ENCODE measurements at regions of chr21 and their contacts with region 1.

Region 1: DNA sequence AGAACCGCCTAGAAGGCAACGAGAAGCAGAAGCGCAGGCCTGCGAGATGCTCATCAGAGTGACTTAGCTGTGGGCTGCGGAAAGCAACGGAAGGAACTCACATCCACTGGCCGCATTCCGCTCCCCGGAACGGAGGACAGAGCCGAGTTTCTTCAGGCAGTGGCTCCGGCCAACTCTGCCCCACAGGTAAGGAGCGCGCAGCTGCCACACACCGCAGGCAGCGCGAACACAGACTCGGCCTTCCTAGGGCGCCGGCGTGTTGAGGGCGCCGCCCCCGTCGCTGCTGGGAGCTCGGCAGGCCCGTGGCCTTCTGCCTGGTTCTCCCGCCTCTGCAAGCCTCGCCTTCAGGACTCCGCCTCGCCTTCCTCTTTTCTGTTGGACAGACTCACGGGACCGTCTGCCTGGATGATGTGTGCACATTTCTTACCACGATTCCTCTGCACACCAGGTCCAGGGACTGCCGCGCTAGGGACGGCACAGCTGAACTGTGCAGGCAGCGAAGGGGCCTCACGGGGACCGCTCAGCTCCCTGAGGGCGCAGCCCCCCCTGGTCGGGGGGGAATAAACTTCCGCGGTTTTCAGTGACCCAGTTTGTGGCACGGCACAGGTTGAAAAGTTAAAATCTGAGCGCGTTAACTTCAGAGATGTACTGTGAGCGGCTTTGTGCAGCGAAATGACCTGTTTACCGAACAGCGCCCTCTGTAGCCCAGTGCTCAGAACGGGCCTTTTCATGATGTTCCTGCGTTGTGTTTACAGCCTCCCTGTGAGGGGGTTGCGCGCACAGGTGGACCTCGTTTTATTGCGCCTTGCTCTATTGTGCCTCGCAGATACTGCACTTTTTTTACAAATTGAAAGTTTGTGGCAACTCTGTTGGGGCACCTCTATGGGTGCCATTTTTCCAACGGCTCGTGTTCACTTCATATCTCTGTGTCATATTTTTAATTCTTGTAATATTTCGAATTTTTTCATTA is 15.8 kb downstream of the TCP10L start:
- DNase-seq: peak; percentile 71 to 89 (median 82)
- H3K4me3 ChIP-seq: peak overlapping the region; percentile 79
- H3K4me3 Mint-ChIP-seq: peak overlapping the region; percentile 87 to 98 (median 96)
- H3K27ac ChIP-seq: peak overlapping the region; percentile 21
- H3K27ac Mint-ChIP-seq: peak overlapping the region; percentile 89 to 97 (median 94)
- H3K4me1 ChIP-seq: no peaks in the 10 kb centered on the region
- H3K4me1 Mint-ChIP-seq: peaks cover 26 to 30% (median 28%) of the 10 kb centered on the region in 3 donors
- H3K27me3 ChIP-seq: no peaks in the 10 kb centered on the region
- H3K27me3 Mint-ChIP-seq: peaks cover 2 to 3% of the 10 kb centered on the region in 2 donors

Region 2: DNA sequence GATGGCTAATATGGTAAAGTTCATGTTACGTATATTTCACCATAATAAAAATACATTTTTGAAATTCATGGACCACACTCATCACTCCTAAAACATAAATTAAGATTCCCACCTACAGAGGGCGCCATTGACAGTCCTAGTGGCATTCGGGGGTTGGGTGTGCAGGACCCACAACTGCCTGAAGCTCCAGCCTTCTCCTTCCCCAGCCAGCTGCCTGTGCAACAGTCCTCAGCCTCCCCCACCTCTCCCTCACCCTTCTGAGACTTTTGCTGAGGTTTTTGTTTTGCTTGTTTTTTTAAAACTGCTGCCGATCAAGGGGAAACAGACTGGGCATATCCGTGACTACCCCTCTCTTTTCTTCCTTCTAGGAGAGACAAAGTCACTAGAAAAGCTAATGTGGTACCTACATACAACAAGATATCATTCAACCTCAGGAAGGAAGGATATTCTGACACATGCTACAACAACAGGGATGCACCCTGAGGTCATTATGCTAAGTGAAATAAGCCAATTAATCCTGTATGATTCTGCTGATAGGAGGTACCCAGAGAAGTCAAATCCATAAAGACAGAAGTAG is 166.3 kb before region 1 on chr21:
- CTCF ChIA-PET with region 1: interaction called, 33 read pairs
- POLR2A ChIA-PET with region 1: interaction called, 3 read pairs
- DNase-seq: peak; percentile 31 to 68 (median 59)
- H3K4me3 ChIP-seq: no peak overlapping the region
- H3K4me3 Mint-ChIP-seq: peak overlapping the region in 2 of 7 donors; percentile 5 to 41
- H3K27ac ChIP-seq: no peak overlapping the region
- H3K27ac Mint-ChIP-seq: peak overlapping the region in 5 of 8 donors; percentile 3 to 76 (median 58)
- H3K4me1 ChIP-seq: peaks cover 4% of the 10 kb centered on the region
- H3K4me1 Mint-ChIP-seq: peaks cover 19 to 32% (median 24%) of the 10 kb centered on the region in 3 donors
- H3K27me3 ChIP-seq: no peaks in the 10 kb centered on the region
- H3K27me3 Mint-ChIP-seq: peaks cover 0 to 3% of the 10 kb centered on the region in 2 donors

Region 3: GRCh38 chr21:32412162-32413014 is 157.2 kb before region 1 on chr21 and contains the start of gene EVA1C:
- CTCF ChIA-PET with region 1: interaction called, 25 read pairs
- POLR2A ChIA-PET with region 1: interaction called, 29 read pairs
- DNase-seq: peak; percentile 68 to 86 (median 80)
- H3K4me3 ChIP-seq: peak within 1 kb of the TSS; percentile 88
- H3K4me3 Mint-ChIP-seq: peak within 1 kb of the TSS; percentile 93 to 97 (median 96)
- H3K27ac ChIP-seq: peak within 1 kb of the TSS; percentile 90
- H3K27ac Mint-ChIP-seq: peak within 1 kb of the TSS; percentile 90 to 99 (median 96)
- H3K4me1 ChIP-seq: peaks cover 34% of the 10 kb centered on the region
- H3K4me1 Mint-ChIP-seq: peaks cover 54 to 86% (median 63%) of the 10 kb centered on the region in 3 donors
- H3K27me3 ChIP-seq: no peaks in the 10 kb centered on the region
- H3K27me3 Mint-ChIP-seq: no peaks in the 10 kb centered on the region
- total RNA-seq, gene EVA1C: 13.4 to 16.2 TPM

Region 4: DNA sequence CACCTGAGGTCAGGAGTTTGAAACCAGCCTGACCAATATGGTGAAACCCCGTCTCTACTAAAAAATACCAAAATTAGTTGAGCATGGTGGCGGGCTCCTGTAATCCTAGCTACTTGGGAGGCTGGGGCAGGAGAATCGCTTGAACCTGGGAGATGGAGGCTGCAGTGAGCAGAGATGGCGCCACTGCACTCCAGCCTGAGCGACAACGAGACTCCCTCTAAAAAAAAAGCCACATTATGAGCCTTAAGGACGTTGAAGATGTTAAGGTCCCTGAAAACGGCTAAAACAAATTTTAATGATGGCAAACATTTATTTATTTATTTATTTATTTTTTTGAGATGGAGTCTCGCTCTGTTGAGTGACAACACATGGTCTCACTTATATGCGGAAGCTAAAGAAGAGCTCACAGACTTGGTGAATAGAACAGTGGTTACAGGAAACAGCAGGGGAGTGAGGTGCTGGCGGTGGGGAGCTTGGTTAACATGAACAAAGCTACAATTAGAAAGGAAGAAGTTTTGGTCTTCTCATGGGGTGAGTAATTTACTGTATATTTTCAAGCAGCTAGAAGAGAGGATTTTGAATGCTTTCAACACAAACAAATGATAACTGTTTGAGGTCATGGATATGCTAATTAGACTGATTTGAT is 31.3 kb before region 1 on chr21:
- CTCF ChIA-PET with region 1: interaction called, 18 read pairs
- POLR2A ChIA-PET with region 1: interaction called, 11 read pairs
- DNase-seq: peak; percentile 10 to 67 (median 50)
- H3K4me3 ChIP-seq: no peak overlapping the region
- H3K4me3 Mint-ChIP-seq: peak overlapping the region in 6 of 7 donors; percentile 0 to 39 (median 18)
- H3K27ac ChIP-seq: no peak overlapping the region
- H3K27ac Mint-ChIP-seq: peak overlapping the region in 7 of 8 donors; percentile 3 to 78 (median 20)
- H3K4me1 ChIP-seq: peaks cover 4% of the 10 kb centered on the region
- H3K4me1 Mint-ChIP-seq: peaks cover 30 to 34% (median 30%) of the 10 kb centered on the region in 3 donors
- H3K27me3 ChIP-seq: no peaks in the 10 kb centered on the region
- H3K27me3 Mint-ChIP-seq: no peaks in the 10 kb centered on the region